ENCODE measurements at regions of chr14 and their contacts with region 1.

Region 1: DNA sequence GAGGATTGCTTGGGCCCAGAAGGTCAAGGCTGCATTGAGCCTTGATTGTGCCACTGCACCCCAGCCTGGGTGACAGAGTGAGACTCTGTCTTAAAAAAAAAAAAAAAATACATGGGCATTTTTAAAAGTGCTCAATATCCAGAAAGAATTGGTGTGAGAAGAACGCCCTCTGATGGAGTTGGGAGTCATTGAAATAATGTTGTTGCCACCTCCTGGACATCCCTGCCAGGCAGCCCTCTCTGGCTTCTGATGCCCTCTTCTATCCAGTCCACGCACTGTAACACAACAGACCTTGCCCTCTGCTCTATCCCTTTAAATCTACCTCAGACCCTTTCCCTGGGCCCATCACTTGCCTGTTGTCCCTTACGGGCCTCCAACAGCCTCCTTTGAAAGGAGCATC is 4.9 kb downstream of the PTGDR start:
- DNase-seq: no peak
- ATAC-seq: no peak
- H3K4me3 Mint-ChIP-seq: no peak overlapping the region
- H3K27ac Mint-ChIP-seq: no peak overlapping the region
- H3K4me1 Mint-ChIP-seq: peaks cover 18% of the 10 kb centered on the region
- H3K27me3 Mint-ChIP-seq: peaks cover 39% of the 10 kb centered on the region
- CTCF ChIP-seq: no peak

Region 2: DNA sequence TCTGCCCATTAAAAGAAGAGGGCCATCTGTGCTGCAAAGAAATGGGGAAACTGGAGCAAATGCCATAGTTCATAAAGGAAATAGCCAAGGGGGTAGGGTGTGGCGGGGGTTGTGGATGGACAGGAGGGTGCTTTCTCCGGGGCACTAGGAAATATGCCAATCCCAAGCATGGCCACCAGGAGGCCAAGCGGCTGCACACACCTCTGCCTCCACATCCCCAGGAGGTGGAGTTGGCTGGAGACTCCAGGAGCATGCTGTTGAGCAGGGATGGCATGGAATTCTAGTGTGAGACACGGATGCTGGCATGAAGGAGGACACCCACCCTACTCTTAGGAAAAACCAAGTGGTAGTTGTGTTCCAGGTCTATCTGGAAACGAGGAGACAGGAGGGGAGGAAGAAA is 228.7 kb before region 1 on chr14:
- CTCF ChIA-PET with region 1: no interaction called
- POLR2A ChIA-PET with region 1: no interaction called
- intact Hi-C with region 1: loop called (anchors 10 kb)
- DNase-seq: no peak
- ATAC-seq: no peak
- H3K4me3 Mint-ChIP-seq: no peak overlapping the region
- H3K27ac Mint-ChIP-seq: no peak overlapping the region
- H3K4me1 Mint-ChIP-seq: peaks cover 29% of the 10 kb centered on the region
- H3K27me3 Mint-ChIP-seq: peaks cover 8% of the 10 kb centered on the region
- CTCF ChIP-seq: no peak

Region 3: DNA sequence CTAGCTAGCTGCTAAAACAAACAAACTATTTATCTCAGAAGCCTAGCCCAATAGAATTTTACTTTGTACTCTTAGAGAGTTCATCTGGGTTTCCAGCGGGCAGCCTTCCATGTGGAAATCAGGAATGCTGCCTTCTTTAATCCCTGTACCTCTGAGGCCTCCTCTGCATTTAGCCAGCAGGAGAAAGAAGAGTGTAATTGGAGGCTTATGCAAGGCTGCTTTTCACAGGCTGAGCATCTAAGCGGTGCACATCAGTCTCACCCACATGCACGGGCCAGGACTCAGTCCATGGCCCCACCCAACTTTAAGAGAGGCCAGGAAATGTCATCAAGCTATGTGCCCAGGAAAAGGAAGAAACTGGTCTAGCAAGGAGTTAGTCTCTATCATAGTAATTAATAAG is 18.9 kb before region 1 on chr14:
- CTCF ChIA-PET with region 1: no interaction called
- POLR2A ChIA-PET with region 1: no interaction called
- intact Hi-C with region 1: no loop called
- DNase-seq: no peak
- ATAC-seq: no peak
- H3K4me3 Mint-ChIP-seq: no peak overlapping the region
- H3K27ac Mint-ChIP-seq: no peak overlapping the region
- H3K4me1 Mint-ChIP-seq: no peaks in the 10 kb centered on the region
- H3K27me3 Mint-ChIP-seq: peaks cover 20% of the 10 kb centered on the region
- CTCF ChIP-seq: no peak

Region 4: GRCh38 chr14:52369305-52369801 is 97.0 kb after region 1 on chr14:
- CTCF ChIA-PET with region 1: no interaction called
- POLR2A ChIA-PET with region 1: no interaction called
- intact Hi-C with region 1: no loop called
- DNase-seq: no peak
- ATAC-seq: no peak
- H3K4me3 Mint-ChIP-seq: no peak overlapping the region
- H3K27ac Mint-ChIP-seq: no peak overlapping the region
- H3K4me1 Mint-ChIP-seq: no peaks in the 10 kb centered on the region
- H3K27me3 Mint-ChIP-seq: peaks cover 3% of the 10 kb centered on the region
- CTCF ChIP-seq: no peak

Region 5: DNA sequence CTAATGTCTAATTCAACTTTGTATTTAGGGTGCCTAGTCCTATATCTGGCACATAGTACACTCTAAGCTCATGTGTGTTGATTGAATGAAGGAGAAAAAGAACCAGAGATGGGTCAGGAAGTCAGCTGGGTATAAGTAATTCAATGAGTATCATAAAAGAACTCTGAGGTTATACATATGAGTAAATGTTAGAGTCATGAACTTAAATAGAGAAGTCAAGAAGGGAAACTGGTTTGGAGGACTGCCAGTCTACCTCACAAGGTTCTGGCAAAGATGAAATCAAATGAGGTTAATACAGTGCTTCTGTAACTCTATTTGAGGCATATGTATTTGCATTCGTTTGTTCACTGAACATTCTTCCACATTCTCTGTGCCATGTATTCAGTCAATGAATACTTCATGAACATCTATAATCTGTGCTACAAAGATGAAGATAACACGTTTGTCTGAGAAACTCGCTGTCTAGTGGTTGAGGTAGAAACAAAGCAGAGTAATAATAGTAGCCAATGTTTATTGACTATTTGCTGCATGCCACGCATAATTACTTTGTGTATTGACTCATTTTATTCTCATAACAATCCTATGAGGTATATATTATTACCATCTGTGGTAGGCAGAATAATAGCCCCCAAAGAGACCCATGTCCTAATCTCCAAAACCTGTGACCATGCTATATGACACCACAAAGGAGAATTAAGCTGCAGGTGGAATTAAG is 130.6 kb after region 1 on chr14:
- CTCF ChIA-PET with region 1: no interaction called
- POLR2A ChIA-PET with region 1: no interaction called
- intact Hi-C with region 1: no loop called
- DNase-seq: no peak
- ATAC-seq: no peak
- H3K4me3 Mint-ChIP-seq: no peak overlapping the region
- H3K27ac Mint-ChIP-seq: no peak overlapping the region
- H3K4me1 Mint-ChIP-seq: no peaks in the 10 kb centered on the region
- H3K27me3 Mint-ChIP-seq: peaks cover 15% of the 10 kb centered on the region
- CTCF ChIP-seq: no peak

Region 6: DNA sequence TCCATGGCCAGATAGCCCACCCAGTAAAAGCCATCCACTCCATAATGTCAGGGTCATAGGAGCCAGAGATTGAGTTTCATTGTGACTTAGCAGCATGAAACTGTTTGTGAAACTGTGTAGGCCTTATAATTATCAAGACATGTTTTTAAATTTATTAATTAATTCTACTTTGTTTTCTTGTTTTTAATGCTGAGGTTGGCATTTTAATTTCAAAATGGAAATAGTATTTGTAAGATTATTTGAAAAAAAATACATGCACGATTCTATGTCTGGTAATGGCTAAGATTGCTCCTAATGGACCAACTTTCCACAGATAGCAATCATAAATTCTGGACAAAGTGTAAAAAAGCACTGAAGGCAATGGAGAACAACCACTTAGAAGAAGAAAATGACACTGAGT is 347.3 kb after region 1 on chr14:
- CTCF ChIA-PET with region 1: no interaction called
- POLR2A ChIA-PET with region 1: no interaction called
- intact Hi-C with region 1: no loop called
- DNase-seq: no peak
- ATAC-seq: no peak
- H3K4me3 Mint-ChIP-seq: no peak overlapping the region
- H3K27ac Mint-ChIP-seq: no peak overlapping the region
- H3K4me1 Mint-ChIP-seq: no peaks in the 10 kb centered on the region
- H3K27me3 Mint-ChIP-seq: peaks cover 2% of the 10 kb centered on the region
- CTCF ChIP-seq: no peak

Measured in activated B cell treated with CpG ODN at 0.5 μM for 24 hours (primary cell).